ENCODE measurements at regions of chrX and their contacts with region 1.

Region 1: DNA sequence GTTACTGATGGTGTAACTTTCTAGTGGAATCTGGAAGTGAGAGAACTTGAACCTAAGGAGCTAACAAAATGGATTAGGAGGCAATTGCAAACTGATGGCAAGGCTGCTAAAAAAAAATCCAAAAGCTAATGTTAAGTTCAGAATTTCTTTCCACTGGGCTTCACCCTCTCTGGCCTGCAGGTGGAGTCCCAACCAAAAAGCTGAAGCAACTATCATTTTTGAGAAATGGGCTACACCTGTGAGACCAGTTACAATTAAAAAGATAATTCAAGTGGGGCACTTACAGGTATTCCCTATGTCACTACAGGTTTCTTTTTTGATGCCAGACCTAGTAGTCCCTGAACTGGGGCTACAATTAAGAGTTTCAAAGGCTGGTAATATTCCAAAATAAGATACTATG is 142.1 kb upstream of the FTHL17 start:
- DNase-seq: peak; percentile 52
- H3K4me3 Mint-ChIP-seq: no peak overlapping the region
- H3K27ac Mint-ChIP-seq: no peak overlapping the region
- H3K4me1 Mint-ChIP-seq: peaks cover 14% of the 10 kb centered on the region
- H3K27me3 Mint-ChIP-seq: peaks cover 20% of the 10 kb centered on the region
- CTCF ChIP-seq: peak; percentile 49

Region 2: DNA sequence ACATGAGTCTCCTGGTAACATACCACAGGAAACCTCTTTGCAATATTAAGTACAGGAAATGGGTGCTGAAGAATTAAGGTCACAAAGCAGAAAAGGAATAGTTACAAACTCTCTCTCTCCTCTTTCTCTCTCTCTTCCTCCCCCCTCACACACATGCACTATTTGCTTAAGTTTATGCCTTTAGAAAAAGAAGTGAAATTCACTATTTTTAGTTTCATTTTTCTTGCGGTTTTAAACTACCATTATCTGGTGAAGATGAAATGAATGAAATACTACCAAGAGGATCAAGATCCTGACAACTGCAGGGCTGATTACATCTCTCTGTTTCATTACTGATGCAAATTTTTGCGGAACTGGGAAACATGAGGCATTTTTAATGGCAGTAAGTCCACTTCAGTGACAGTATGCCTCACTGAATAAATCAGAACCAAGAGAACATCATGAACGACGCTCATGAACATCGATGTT is 77.8 kb before region 1 on chrX:
- CTCF ChIA-PET with region 1: no interaction called
- POLR2A ChIA-PET with region 1: no interaction called
- intact Hi-C with region 1: no loop called
- DNase-seq: no peak
- H3K4me3 Mint-ChIP-seq: no peak overlapping the region
- H3K27ac Mint-ChIP-seq: no peak overlapping the region
- H3K4me1 Mint-ChIP-seq: no peaks in the 10 kb centered on the region
- H3K27me3 Mint-ChIP-seq: peaks cover 5% of the 10 kb centered on the region
- CTCF ChIP-seq: no peak

Region 3: GRCh38 chrX:31260351-31260750 is 46.4 kb after region 1 on chrX:
- CTCF ChIA-PET with region 1: interaction called, 12 read pairs
- POLR2A ChIA-PET with region 1: interaction called, 9 read pairs
- intact Hi-C with region 1: loop called (anchors 2 kb)
- DNase-seq: peak; percentile 68
- H3K4me3 Mint-ChIP-seq: no peak overlapping the region
- H3K27ac Mint-ChIP-seq: peak overlapping the region; percentile 79
- H3K4me1 Mint-ChIP-seq: peaks cover 13% of the 10 kb centered on the region
- H3K27me3 Mint-ChIP-seq: peaks cover 29% of the 10 kb centered on the region
- CTCF ChIP-seq: no peak

Region 4: GRCh38 chrX:31266172-31267076 is 52.5 kb after region 1 on chrX:
- CTCF ChIA-PET with region 1: interaction called, 7 read pairs
- POLR2A ChIA-PET with region 1: interaction called, 9 read pairs
- intact Hi-C with region 1: loop called (anchors 2 kb)
- DNase-seq: peak; percentile 53
- H3K4me3 Mint-ChIP-seq: peak overlapping the region; percentile 74
- H3K27ac Mint-ChIP-seq: peak overlapping the region; percentile 87
- H3K4me1 Mint-ChIP-seq: peaks cover 8% of the 10 kb centered on the region
- H3K27me3 Mint-ChIP-seq: peaks cover 44% of the 10 kb centered on the region
- CTCF ChIP-seq: no peak

Region 5: DNA sequence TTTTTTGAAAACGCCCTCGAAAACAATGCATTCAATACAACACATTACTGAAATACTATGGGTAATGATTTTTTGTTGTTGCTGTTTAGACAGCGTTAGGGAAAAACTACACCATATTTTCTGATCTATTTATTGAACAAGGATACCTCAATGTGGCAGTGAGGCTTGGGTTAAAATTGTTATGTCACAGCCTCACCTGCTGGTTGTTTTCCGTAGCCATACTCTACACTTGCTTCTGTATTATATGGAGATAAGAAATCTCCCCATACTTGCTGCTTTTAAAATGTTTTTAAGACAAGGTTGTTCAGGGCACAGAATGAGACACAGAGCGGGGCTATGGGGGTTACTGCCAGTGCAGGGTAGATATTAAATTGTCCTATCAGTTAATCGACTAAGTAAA is 79.5 kb after region 1 on chrX:
- CTCF ChIA-PET with region 1: interaction called, 36 read pairs
- POLR2A ChIA-PET with region 1: interaction called, 3 read pairs
- intact Hi-C with region 1: loop called (anchors 1 kb)
- DNase-seq: peak; percentile 4
- H3K4me3 Mint-ChIP-seq: no peak overlapping the region
- H3K27ac Mint-ChIP-seq: no peak overlapping the region
- H3K4me1 Mint-ChIP-seq: no peaks in the 10 kb centered on the region
- H3K27me3 Mint-ChIP-seq: peaks cover under 1% of the 10 kb centered on the region
- CTCF ChIP-seq: peak; percentile 12

Region 6: DNA sequence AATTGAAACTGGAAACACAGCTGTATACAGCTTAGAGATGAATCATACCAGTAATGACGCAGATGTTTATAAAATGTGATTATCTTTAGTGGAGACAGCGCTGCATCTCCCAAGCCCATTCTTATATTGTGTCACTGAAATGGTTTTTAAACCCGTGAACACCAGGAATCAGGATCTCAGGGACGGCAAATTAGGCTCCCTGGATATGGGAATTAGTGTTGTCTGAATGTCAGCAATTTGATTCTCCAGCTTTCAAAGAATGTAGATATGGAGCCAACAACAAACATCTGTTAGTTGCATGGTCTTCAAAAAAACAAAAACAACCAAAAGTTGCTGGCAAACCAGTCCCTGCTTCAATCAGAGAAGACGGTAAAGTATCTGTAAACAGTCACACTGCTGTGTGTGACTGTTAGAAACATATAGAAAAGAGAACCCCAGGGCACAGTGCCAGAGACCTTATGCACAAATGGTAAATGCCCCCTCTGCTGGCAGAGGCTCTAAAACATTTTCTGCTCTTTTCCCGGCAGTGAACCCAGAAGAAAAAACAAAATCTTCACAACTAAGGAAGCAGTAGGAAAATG is 209.8 kb after region 1 on chrX:
- CTCF ChIA-PET with region 1: interaction called, 45 read pairs
- POLR2A ChIA-PET with region 1: no interaction called
- intact Hi-C with region 1: loop called (anchors 2 kb)
- DNase-seq: peak; percentile 71
- H3K4me3 Mint-ChIP-seq: no peak overlapping the region
- H3K27ac Mint-ChIP-seq: no peak overlapping the region
- H3K4me1 Mint-ChIP-seq: peaks cover 8% of the 10 kb centered on the region
- H3K27me3 Mint-ChIP-seq: peaks cover 17% of the 10 kb centered on the region
- CTCF ChIP-seq: peak; percentile 31

Region 7: DNA sequence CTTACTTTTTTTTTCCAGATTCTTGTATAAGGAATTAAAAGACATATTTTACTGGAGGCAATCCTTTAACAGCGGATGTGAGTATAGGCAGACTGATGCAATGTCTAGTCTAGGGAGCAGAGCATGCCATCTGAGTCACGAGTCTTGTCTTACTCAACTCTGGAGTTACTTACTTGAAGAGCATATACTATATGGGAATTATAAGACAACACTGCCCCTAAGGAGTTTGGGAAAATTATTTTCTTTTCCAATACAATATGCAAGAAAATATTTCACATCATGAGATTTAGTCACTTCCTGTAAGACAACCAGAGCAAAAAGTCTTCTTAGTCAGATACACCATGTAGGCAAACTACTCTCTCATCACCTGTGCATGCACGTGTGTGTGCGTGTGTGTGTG is 395.2 kb after region 1 on chrX:
- CTCF ChIA-PET with region 1: interaction called, 3 read pairs
- POLR2A ChIA-PET with region 1: no interaction called
- intact Hi-C with region 1: loop called (anchors 2 kb)
- DNase-seq: peak; percentile 88
- H3K4me3 Mint-ChIP-seq: no peak overlapping the region
- H3K27ac Mint-ChIP-seq: peak overlapping the region; percentile 55
- H3K4me1 Mint-ChIP-seq: peaks cover 16% of the 10 kb centered on the region
- H3K27me3 Mint-ChIP-seq: no peaks in the 10 kb centered on the region
- CTCF ChIP-seq: no peak

Region 8: GRCh38 chrX:31658360-31658759 is 444.4 kb after region 1 on chrX:
- CTCF ChIA-PET with region 1: interaction called, 68 read pairs
- POLR2A ChIA-PET with region 1: interaction called, 3 read pairs
- intact Hi-C with region 1: loop called (anchors 1 kb)
- DNase-seq: peak; percentile 42
- H3K4me3 Mint-ChIP-seq: no peak overlapping the region
- H3K27ac Mint-ChIP-seq: no peak overlapping the region
- H3K4me1 Mint-ChIP-seq: no peaks in the 10 kb centered on the region
- H3K27me3 Mint-ChIP-seq: peaks cover 39% of the 10 kb centered on the region
- CTCF ChIP-seq: peak; percentile 42